Common myeloid progenitor, CD34-positive (primary cell): ENCODE measurements at regions of chr10 and their contacts with region 1.

Region 1: GRCh38 chr10:97686962-97687784 is at the start of gene AVPI1:
- DNase-seq: peak; percentile 96 to 98 (median 98)
- H3K4me3 ChIP-seq: peak within 1 kb of the TSS; percentile 51 to 86 (median 74)
- H3K27ac ChIP-seq: peak within 1 kb of the TSS; percentile 40 to 72
- H3K4me1 ChIP-seq: peaks cover 0 to 33% (median 23%) of the 10 kb centered on the region in 4 experiments
- H3K27me3 ChIP-seq: no peaks in the 10 kb centered on the region

Region 2: GRCh38 chr10:97601268-97602215 is 85.6 kb before region 1 on chr10:
- CTCF ChIA-PET with region 1: no interaction called
- POLR2A ChIA-PET with region 1: no interaction called
- DNase-seq: no peak
- H3K4me3 ChIP-seq: no peak overlapping the region
- H3K27ac ChIP-seq: no peak overlapping the region
- H3K4me1 ChIP-seq: peaks cover 0 to 2% (median 0%) of the 10 kb centered on the region in 4 experiments
- H3K27me3 ChIP-seq: peaks cover 0 to 4% (median 0%) of the 10 kb centered on the region in 5 experiments

Region 3: GRCh38 chr10:97667463-97667980 is 19.7 kb before region 1 on chr10:
- CTCF ChIA-PET with region 1: interaction called, 13 read pairs
- POLR2A ChIA-PET with region 1: no interaction called
- DNase-seq: no peak
- H3K4me3 ChIP-seq: no peak overlapping the region
- H3K27ac ChIP-seq: no peak overlapping the region
- H3K4me1 ChIP-seq: peaks cover 0 to 3% (median 0%) of the 10 kb centered on the region in 4 experiments
- H3K27me3 ChIP-seq: no peaks in the 10 kb centered on the region

Region 4: GRCh38 chr10:97701438-97702069 is 14.4 kb after region 1 on chr10:
- CTCF ChIA-PET with region 1: interaction called, 40 read pairs
- POLR2A ChIA-PET with region 1: interaction called, 6 read pairs
- DNase-seq: peak; percentile 68 to 82 (median 74)
- H3K4me3 ChIP-seq: no peak overlapping the region
- H3K27ac ChIP-seq: no peak overlapping the region
- H3K4me1 ChIP-seq: no peaks in the 10 kb centered on the region
- H3K27me3 ChIP-seq: peaks cover 0 to 4% (median 0%) of the 10 kb centered on the region in 5 experiments

Region 5: GRCh38 chr10:97731346-97732051 is 44.3 kb after region 1 on chr10:
- CTCF ChIA-PET with region 1: interaction called, 17 read pairs
- POLR2A ChIA-PET with region 1: no interaction called
- DNase-seq: peak; percentile 59 to 78 (median 62)
- H3K4me3 ChIP-seq: no peak overlapping the region
- H3K27ac ChIP-seq: no peak overlapping the region
- H3K4me1 ChIP-seq: peaks cover 0 to under 1% (median 0%) of the 10 kb centered on the region in 4 experiments
- H3K27me3 ChIP-seq: no peaks in the 10 kb centered on the region

Region 6: GRCh38 chr10:98013122-98013521 is 325.9 kb after region 1 on chr10:
- CTCF ChIA-PET with region 1: no interaction called
- POLR2A ChIA-PET with region 1: no interaction called
- DNase-seq: no peak
- H3K4me3 ChIP-seq: no peak overlapping the region
- H3K27ac ChIP-seq: no peak overlapping the region
- H3K4me1 ChIP-seq: no peaks in the 10 kb centered on the region
- H3K27me3 ChIP-seq: peaks cover 0 to 51% (median 19%) of the 10 kb centered on the region in 5 experiments